Calu3 (cell line): ENCODE measurements at regions of chr1 and their contacts with region 1.

Region 1: DNA sequence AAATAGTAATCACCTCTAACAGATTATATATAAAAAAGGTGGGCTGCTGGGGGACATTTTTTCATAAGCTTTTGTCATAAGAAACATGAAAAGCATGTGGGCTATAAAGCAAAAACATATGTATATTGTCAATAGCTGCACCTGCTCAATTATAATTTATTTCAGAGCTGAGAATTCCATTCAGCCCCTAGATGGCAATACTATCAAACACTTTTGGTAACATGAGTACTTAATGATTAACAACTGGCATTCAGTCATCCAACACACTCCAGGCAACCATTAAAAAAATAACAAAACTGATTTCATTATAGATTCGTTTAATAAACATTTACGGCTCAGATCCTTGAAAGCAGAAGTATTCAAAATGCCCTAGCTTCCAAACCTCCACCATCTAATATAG is 115.1 kb downstream of the KCTD3 start:
- DNase-seq: peak; percentile 25
- H3K4me3 Mint-ChIP-seq: no peak overlapping the region
- H3K27ac Mint-ChIP-seq: no peak overlapping the region
- H3K4me1 Mint-ChIP-seq: no peaks in the 10 kb centered on the region
- H3K27me3 Mint-ChIP-seq: no peaks in the 10 kb centered on the region
- CTCF ChIP-seq: peak; percentile 55

Region 2: GRCh38 chr1:215405211-215405610 is 277.0 kb before region 1 on chr1:
- CTCF ChIA-PET with region 1: no interaction called
- intact Hi-C with region 1: no loop called
- DNase-seq: no peak
- H3K4me3 Mint-ChIP-seq: no peak overlapping the region
- H3K27ac Mint-ChIP-seq: no peak overlapping the region
- H3K4me1 Mint-ChIP-seq: no peaks in the 10 kb centered on the region
- H3K27me3 Mint-ChIP-seq: no peaks in the 10 kb centered on the region
- CTCF ChIP-seq: no peak

Region 3: GRCh38 chr1:215643592-215644321 is 38.5 kb before region 1 on chr1:
- CTCF ChIA-PET with region 1: no interaction called
- intact Hi-C with region 1: no loop called
- DNase-seq: no peak
- H3K4me3 Mint-ChIP-seq: no peak overlapping the region
- H3K27ac Mint-ChIP-seq: no peak overlapping the region
- H3K4me1 Mint-ChIP-seq: no peaks in the 10 kb centered on the region
- H3K27me3 Mint-ChIP-seq: no peaks in the 10 kb centered on the region
- CTCF ChIP-seq: no peak

Region 4: GRCh38 chr1:215824245-215824644 is 142.0 kb after region 1 on chr1:
- CTCF ChIA-PET with region 1: no interaction called
- intact Hi-C with region 1: loop called (anchors 5 kb)
- DNase-seq: peak; percentile 21
- H3K4me3 Mint-ChIP-seq: no peak overlapping the region
- H3K27ac Mint-ChIP-seq: no peak overlapping the region
- H3K4me1 Mint-ChIP-seq: no peaks in the 10 kb centered on the region
- H3K27me3 Mint-ChIP-seq: no peaks in the 10 kb centered on the region
- CTCF ChIP-seq: peak; percentile 57

Region 5: DNA sequence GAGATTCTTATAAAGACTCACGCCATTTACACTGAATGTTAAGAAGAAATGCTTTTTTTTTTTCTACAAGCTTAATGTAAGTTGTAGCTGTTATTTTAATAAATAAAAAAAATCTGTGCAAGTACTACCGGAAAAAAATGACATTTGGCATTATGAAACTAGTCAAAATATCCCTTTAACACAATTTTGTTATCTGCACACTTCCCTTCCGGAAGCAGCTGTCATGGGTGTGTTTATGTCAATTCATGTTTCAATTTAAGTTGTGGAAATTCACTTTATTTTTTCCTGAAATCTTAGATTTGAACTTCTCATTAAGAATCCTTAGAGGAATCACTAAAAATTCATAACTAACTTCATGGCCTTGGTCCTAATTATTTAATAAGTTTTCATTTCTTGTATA is 193.0 kb after region 1 on chr1:
- CTCF ChIA-PET with region 1: no interaction called
- intact Hi-C with region 1: no loop called
- DNase-seq: no peak
- H3K4me3 Mint-ChIP-seq: no peak overlapping the region
- H3K27ac Mint-ChIP-seq: no peak overlapping the region
- H3K4me1 Mint-ChIP-seq: no peaks in the 10 kb centered on the region
- H3K27me3 Mint-ChIP-seq: no peaks in the 10 kb centered on the region
- CTCF ChIP-seq: no peak

Region 6: GRCh38 chr1:215987092-215987875 is 305.1 kb after region 1 on chr1:
- CTCF ChIA-PET with region 1: no interaction called
- intact Hi-C with region 1: loop called (anchors 2 kb)
- DNase-seq: no peak
- H3K4me3 Mint-ChIP-seq: no peak overlapping the region
- H3K27ac Mint-ChIP-seq: peak overlapping the region; percentile 46
- H3K4me1 Mint-ChIP-seq: peaks cover 25% of the 10 kb centered on the region
- H3K27me3 Mint-ChIP-seq: no peaks in the 10 kb centered on the region
- CTCF ChIP-seq: no peak

Region 7: GRCh38 chr1:216119602-216120001 is 437.4 kb after region 1 on chr1:
- CTCF ChIA-PET with region 1: interaction called, 4 read pairs
- intact Hi-C with region 1: loop called (anchors 5 kb)
- DNase-seq: peak; percentile 12
- H3K4me3 Mint-ChIP-seq: no peak overlapping the region
- H3K27ac Mint-ChIP-seq: no peak overlapping the region
- H3K4me1 Mint-ChIP-seq: no peaks in the 10 kb centered on the region
- H3K27me3 Mint-ChIP-seq: no peaks in the 10 kb centered on the region
- CTCF ChIP-seq: no peak

Region 8: DNA sequence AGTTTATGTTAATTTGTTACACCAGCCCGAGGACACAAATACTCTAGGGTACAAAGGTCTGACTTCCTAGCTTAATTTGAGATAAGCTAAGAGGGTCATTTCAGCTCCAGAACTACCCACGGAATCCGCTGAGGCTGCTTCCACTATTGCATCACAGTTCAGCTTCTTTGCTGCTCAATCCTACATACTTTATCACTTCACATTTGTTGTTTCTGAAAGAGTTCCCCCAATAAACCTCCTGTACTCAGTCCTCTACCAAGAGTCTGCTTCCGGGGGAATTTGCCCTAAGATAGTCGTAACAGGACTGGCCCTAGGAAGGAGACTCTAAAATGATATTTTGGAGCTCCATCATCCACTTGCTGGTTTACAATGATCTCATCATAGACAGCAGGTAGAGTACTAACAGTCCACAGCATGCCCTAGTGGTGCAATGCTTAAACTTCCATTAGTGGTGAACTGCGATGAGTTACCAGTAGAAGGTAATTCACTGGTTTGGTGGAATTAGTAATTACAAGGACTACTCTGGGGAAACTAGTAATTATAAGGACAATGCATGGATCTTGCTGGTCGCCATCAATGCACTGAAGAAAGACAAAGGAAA is 511.7 kb after region 1 on chr1:
- CTCF ChIA-PET with region 1: no interaction called
- intact Hi-C with region 1: loop called (anchors 5 kb)
- DNase-seq: peak; percentile 36
- H3K4me3 Mint-ChIP-seq: peak overlapping the region; percentile 1
- H3K27ac Mint-ChIP-seq: no peak overlapping the region
- H3K4me1 Mint-ChIP-seq: peaks cover 14% of the 10 kb centered on the region
- H3K27me3 Mint-ChIP-seq: no peaks in the 10 kb centered on the region
- CTCF ChIP-seq: peak; percentile 22

Region 9: GRCh38 chr1:216566641-216567205 is 884.5 kb after region 1 on chr1:
- CTCF ChIA-PET with region 1: no interaction called
- intact Hi-C with region 1: loop called (anchors 5 kb)
- DNase-seq: peak; percentile 23
- H3K4me3 Mint-ChIP-seq: no peak overlapping the region
- H3K27ac Mint-ChIP-seq: no peak overlapping the region
- H3K4me1 Mint-ChIP-seq: no peaks in the 10 kb centered on the region
- H3K27me3 Mint-ChIP-seq: peaks cover 22% of the 10 kb centered on the region
- CTCF ChIP-seq: no peak

Region 10: GRCh38 chr1:216742625-216743024 is 1060.4 kb after region 1 on chr1:
- CTCF ChIA-PET with region 1: no interaction called
- intact Hi-C with region 1: loop called (anchors 2 kb)
- DNase-seq: peak; percentile 13
- H3K4me3 Mint-ChIP-seq: no peak overlapping the region
- H3K27ac Mint-ChIP-seq: no peak overlapping the region
- H3K4me1 Mint-ChIP-seq: no peaks in the 10 kb centered on the region
- H3K27me3 Mint-ChIP-seq: no peaks in the 10 kb centered on the region
- CTCF ChIP-seq: peak; percentile 37